Left colon (tissue), 2 donors: ENCODE measurements at regions of chr7 and their contacts with region 1.

Region 1: GRCh38 chr7:35906191-35906908 is 105.5 kb downstream of the SEPTIN7 start:
- DNase-seq: peak; percentile 24 to 29
- ATAC-seq: peak; percentile 76

Region 2: GRCh38 chr7:35701287-35701900 is 205.0 kb before region 1 on chr7:
- intact Hi-C with region 1: loop called in 1 of 2 experiments (anchors 10 kb)
- DNase-seq: no peak
- ATAC-seq: no peak

Region 3: GRCh38 chr7:35707422-35707821 is 198.9 kb before region 1 on chr7:
- intact Hi-C with region 1: loop called (anchors 2 to 10 kb)
- DNase-seq: no peak
- ATAC-seq: no peak

Region 4: DNA sequence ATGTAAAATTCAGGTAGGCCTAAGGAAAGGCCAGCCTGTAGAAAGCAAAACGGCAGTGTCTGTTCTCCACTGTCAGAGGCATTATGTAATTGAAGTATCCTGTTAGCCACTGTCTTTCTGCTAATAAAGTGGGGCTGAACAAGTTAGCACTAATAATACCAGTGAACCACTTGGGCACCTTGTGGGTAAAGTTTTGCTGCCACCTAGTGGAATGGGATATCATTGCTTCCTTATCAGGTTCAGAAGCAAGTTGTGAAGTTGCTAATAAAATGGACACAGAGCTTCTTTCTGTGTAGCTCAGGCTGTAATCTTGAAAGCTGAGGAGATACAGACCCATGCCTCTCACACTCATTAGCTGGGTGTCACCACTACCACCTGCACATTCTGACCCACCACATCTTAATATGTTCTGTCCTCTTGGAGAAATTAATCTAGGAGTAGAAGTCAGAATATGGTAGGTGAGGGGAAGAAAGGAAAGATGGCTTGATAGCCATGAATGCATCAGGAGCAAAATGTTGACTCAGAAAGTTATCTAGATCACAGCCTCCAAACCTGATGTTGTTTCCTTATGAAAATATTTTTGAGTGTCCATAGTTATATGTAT is 69.6 kb after region 1 on chr7:
- intact Hi-C with region 1: loop called in 1 of 2 experiments (anchors 10 kb)
- DNase-seq: no peak
- ATAC-seq: peak; percentile 69